HepG2 (cell line): ENCODE measurements at regions of chr6 and their contacts with region 1.

Region 1: DNA sequence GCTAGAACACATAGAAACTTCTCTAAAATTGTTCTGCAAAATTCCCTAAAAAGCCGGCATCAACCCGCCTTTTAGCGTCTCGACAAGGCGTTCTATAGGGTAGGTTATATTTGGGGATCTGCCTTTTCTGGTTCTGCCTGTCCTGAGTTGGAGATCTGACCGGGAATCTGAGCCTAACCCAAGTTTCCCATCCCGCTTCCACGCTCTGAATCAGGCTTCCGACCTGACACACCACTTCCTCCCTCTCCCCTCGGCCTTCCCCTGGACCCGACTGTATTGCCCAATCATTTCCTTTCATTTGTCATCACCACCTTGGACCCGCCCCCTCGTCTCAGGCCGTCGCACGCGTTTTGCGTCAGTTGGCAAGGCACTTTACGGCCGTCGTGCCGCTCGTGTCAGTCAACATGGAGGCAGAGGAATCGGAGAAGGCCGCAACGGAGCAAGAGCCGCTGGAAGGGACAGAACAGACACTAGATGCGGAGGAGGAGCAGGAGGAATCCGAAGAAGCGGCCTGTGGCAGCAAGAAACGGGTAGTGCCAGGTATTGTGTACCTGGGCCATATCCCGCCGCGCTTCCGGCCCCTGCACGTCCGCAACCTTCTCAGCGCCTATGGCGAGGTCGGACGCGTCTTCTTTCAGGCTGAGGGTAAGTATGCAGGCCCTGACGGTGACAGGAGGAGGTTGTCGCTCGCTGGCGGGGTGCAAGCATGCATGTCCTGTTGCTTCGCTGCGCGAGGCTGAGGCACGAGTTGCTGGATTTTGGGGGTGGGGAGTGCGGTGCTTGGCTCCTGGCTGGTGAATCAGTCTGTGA is at the start of gene ABT1:
- DNase-seq: peak; percentile 99
- ATAC-seq: peak; percentile 74
- H3K4me3 ChIP-seq: peak within 1 kb of the TSS; percentile 87 to 100 (median 88)
- H3K27ac ChIP-seq: peak within 1 kb of the TSS; percentile 80
- H3K4me1 ChIP-seq: peaks cover 31% of the 10 kb centered on the region
- H3K27me3 ChIP-seq: no peaks in the 10 kb centered on the region; a peak in 1 of 5 replicates
- CTCF ChIP-seq: peak; percentile 43
- EP300 ChIP-seq: peak; percentile 42 to 72; a peak in 2 of 4 replicates
- POLR2A ChIP-seq: peak; percentile 86 to 94
- RAD21 ChIP-seq: no peak
- total RNA-seq, gene ABT1: 38.4 and 50.8 TPM in 2 replicates

Region 2: GRCh38 chr6:26240154-26241032 is 356.4 kb before region 1 on chr6:
- CTCF ChIA-PET with region 1: no interaction called
- POLR2A ChIA-PET with region 1: no interaction called
- in situ Hi-C with region 1: no loop called
- intact Hi-C with region 1: no loop called
- DNase-seq: no peak
- ATAC-seq: no peak
- H3K4me3 ChIP-seq: no peak overlapping the region
- H3K27ac ChIP-seq: no peak overlapping the region
- H3K4me1 ChIP-seq: peaks cover 2% of the 10 kb centered on the region; the same call in 1 of the 2 replicates
- H3K27me3 ChIP-seq: peaks cover 0 to 3% of the 10 kb centered on the region in 2 experiments; a peak in 2 of 5 replicates
- CTCF ChIP-seq: no peak
- EP300 ChIP-seq: no peak
- POLR2A ChIP-seq: no peak
- RAD21 ChIP-seq: no peak

Region 3: DNA sequence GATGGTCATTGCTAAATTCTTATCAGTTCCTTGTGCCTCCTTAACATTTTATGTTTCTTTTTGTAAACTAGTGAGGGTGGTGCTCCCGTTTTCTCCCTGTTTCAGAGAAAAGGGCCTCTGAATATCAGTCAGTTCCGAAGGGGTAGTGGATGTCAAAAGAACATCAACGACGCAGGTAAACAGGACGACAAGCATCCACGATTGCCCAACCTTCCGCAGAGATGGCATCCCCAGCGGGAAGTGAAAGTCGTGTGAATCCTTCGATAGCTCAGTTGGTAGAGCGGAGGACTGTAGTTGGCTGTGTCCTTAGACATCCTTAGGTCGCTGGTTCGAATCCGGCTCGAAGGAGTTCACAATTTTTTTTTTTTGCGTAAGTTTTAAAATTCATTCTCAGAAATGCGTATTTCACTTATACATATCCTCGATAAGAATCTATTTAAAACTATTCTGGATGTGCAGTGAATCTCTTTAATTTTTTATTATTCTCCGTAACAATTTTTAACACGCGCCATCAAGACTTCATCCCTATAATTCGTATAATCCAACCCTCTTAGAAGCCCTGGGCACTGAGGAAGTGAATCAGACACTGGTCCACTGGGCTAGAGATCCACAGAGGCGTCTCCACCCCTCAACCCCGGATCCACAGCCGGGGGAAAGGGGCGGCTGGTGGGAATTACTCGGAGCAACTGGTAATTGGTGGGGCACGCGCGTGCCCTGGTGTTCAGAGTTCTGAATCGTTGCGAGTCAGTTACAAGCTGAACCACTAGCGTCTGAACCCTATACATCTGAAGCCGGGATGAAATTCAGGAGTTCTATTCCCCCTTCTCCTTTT is 28.0 kb before region 1 on chr6:
- CTCF ChIA-PET with region 1: interaction called, 27 read pairs
- POLR2A ChIA-PET with region 1: interaction called, 12 read pairs
- in situ Hi-C with region 1: no loop called
- intact Hi-C with region 1: loop called (anchors 1 kb)
- DNase-seq: peak; percentile 95
- ATAC-seq: peak; percentile 35
- H3K4me3 ChIP-seq: peak overlapping the region; percentile 55 to 85 (median 78)
- H3K27ac ChIP-seq: peak overlapping the region; percentile 7
- H3K4me1 ChIP-seq: peaks cover 61% of the 10 kb centered on the region
- H3K27me3 ChIP-seq: no peaks in the 10 kb centered on the region; a peak in 1 of 5 replicates
- CTCF ChIP-seq: peak; percentile 5; the same call in 1 of the 2 replicates
- EP300 ChIP-seq: 0 out of 4 replicates have a peak, but pooled peaks of 1 of the 2 experiments have one; percentile 5
- POLR2A ChIP-seq: no peak
- RAD21 ChIP-seq: no peak

Region 4: GRCh38 chr6:26576929-26577719 is 19.7 kb before region 1 on chr6:
- CTCF ChIA-PET with region 1: interaction called, 27 read pairs
- POLR2A ChIA-PET with region 1: interaction called, 12 read pairs
- in situ Hi-C with region 1: no loop called
- intact Hi-C with region 1: loop called (anchors 1 kb)
- DNase-seq: peak; percentile 75
- ATAC-seq: peak; percentile 49
- H3K4me3 ChIP-seq: peak overlapping the region; percentile 54 to 71 (median 57)
- H3K27ac ChIP-seq: no peak overlapping the region
- H3K4me1 ChIP-seq: peaks cover 37% of the 10 kb centered on the region
- H3K27me3 ChIP-seq: 0 out of 5 replicates have a peak, but pooled peaks cover 0 to 1% of the 10 kb centered on the region in 2 experiments
- CTCF ChIP-seq: no peak
- EP300 ChIP-seq: no peak
- POLR2A ChIP-seq: no peak
- RAD21 ChIP-seq: no peak

Region 5: DNA sequence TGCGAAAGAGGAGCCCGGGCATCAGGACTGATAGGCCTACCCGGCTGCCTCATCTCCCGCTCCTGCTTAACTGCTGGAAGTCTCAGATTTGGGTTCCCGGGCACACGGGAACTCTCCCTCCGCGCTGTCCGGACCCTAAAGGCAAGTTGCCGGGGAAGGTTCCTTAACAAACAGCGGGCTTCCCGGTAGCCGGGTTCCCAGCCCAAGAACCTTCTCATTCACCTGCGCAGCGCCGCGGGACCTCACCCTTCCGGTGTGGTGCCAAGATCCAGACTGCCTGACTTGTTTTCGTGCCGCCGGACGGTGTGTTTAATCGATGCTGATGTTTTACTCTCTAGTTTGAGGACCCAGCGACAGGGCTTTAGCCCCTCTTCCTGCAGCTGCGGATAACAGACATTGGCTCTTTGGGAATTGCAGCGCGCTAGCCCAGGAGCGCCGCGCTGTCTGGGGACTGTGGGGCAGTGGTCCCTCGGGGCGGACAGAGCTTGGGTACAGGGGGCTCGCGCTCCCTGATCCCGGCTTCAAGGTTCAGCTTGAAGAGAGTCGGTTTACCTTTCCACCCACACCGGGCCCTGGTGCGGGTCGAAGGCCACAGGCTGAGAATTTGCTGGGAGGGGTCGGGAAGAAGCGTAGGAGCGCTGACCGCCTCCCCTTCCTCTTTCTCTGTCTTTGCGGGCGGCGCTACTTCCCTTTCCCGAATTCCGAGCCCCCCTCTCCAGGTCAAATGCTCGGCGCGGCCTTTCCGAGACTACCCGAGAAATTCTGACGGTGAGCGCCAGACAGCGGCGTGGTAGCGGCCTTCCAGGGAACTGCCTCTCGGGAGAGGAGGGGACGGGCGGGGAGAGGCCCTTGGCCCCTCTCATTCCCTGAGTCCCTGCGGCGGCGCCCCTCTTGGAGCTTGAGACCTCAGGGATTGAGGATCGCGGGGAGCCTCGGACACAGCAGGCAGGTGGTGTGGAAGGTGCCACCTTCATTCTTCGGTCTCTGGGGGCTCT is 17.2 kb after region 1 on chr6:
- CTCF ChIA-PET with region 1: no interaction called
- POLR2A ChIA-PET with region 1: no interaction called
- in situ Hi-C with region 1: no loop called
- intact Hi-C with region 1: no loop called
- DNase-seq: no peak
- ATAC-seq: peak; percentile 85
- H3K4me3 ChIP-seq: peak overlapping the region; percentile 39 to 62 (median 47); a peak in 4 of 6 replicates
- H3K27ac ChIP-seq: no peak overlapping the region
- H3K4me1 ChIP-seq: no peaks in the 10 kb centered on the region
- H3K27me3 ChIP-seq: peaks cover 4 to 19% of the 10 kb centered on the region in 2 experiments; a peak in 4 of 5 replicates
- CTCF ChIP-seq: no peak; the same call in 1 of the 2 replicates
- EP300 ChIP-seq: no peak
- POLR2A ChIP-seq: no peak
- RAD21 ChIP-seq: no peak